T-cell (primary cell): ENCODE measurements at regions of chr4 and their contacts with region 1.

Region 1: DNA sequence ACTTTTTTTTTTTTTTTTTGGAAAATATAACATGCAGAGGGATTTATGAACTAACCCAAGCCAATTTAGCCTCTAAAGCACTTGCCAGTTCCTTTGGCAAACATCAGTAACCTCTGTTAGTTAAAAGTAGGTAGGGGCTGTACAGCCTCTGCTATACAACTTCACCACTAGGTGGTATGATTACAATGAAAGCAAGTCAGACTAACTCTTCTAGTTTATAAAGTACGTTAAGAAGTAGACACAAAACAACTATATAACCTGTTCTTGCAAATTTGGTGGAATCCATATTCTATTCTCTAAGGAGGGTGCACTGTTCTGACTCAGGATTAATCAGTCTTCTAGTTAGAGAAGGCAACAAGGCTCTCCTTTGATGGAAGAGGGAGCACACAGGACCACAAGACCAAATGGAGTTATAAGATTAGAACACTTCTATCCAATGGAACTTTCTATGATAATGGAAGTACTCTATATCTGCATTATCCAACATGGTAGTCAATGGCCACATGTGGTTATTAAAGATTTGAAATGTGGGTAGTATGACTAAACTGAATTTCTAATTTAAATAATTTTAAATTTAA is 12.8 kb downstream of the AIMP1 start:
- DNase-seq: peak in 1 of 35 experiments; percentile 35
- ATAC-seq: peak in 3 of 4 experiments; percentile 37 to 66 (median 54)
- H3K4me3 ChIP-seq: no peak overlapping the region
- H3K4me3 Mint-ChIP-seq: no peak overlapping the region
- H3K27ac ChIP-seq: no peak overlapping the region
- H3K27ac Mint-ChIP-seq: no peak overlapping the region
- H3K4me1 ChIP-seq: no peaks in the 10 kb centered on the region
- H3K4me1 Mint-ChIP-seq: peaks cover 0 to 15% (median 5%) of the 10 kb centered on the region in 3 donors
- H3K27me3 ChIP-seq: no peaks in the 10 kb centered on the region
- H3K27me3 Mint-ChIP-seq: no peaks in the 10 kb centered on the region

Region 2: DNA sequence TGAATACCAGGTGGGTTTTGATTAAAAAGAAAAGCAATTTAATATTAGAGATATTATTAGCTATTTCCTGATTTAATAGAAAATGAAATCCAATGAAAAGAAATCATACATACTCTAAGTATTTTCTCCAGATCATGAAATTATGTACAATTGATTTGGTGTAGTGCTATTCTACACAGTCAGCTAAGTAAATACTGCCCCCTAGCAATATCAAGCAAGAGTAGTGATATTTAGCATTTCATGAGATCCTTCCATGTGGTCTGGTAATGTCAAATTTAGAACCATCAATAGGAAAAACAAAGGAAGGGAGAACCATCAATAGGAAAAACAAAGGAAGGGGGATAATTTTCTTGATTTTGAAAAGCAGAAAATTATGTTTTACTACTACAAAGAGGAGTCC is 127.8 kb before region 1 on chr4:
- CTCF ChIA-PET with region 1: no interaction called
- POLR2A ChIA-PET with region 1: no interaction called
- DNase-seq: no peak
- ATAC-seq: no peak
- H3K4me3 ChIP-seq: no peak overlapping the region
- H3K4me3 Mint-ChIP-seq: no peak overlapping the region
- H3K27ac ChIP-seq: no peak overlapping the region
- H3K27ac Mint-ChIP-seq: no peak overlapping the region
- H3K4me1 ChIP-seq: no peaks in the 10 kb centered on the region
- H3K4me1 Mint-ChIP-seq: no peaks in the 10 kb centered on the region
- H3K27me3 ChIP-seq: no peaks in the 10 kb centered on the region
- H3K27me3 Mint-ChIP-seq: no peaks in the 10 kb centered on the region

Region 3: DNA sequence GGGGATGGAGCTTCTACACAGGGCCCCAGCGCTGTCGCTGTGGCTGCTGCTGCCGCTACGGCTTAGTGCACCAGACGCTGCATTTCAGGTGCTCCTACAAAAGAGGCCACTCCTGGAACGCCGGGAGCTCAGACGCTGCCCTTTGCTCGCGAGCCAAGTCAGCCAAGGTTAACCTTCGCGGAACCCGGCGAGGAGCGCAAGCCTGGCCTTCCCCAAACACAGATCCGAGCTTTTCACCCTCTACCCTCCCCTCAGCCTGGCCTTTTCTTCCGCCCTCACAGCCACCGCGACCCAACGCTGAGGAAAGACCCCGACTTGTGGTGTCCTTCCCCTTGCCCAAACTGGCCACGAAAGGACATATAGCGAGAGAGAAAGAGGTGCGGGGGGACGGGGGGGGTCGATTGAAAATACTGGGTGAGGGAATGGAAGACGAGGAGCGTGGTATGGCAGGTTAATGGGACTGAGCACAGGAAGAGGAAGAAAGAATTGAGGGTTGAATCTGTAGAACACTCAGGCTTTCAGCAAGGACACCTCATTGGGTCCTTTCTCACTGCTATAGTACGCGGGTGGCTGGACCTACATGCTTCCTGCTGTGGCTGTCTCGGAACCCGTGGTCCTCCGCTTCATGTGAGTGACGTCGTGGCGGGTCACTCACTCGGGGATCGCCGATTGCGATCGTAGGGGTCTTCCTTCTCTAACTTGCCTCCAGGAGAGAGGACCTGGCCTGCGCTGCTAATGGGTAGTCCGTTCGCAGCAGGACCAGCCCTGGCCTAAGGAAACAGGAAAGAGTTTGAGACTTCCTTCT is 13.0 kb before region 1 on chr4 and contains the starts of genes AIMP1 and TBCK:
- CTCF ChIA-PET with region 1: interaction called, 4 to 12 read pairs
- POLR2A ChIA-PET with region 1: interaction called, 5 read pairs
- DNase-seq: peak; percentile 81 to 93 (median 88)
- ATAC-seq: peak; percentile 87 to 92 (median 88)
- H3K4me3 ChIP-seq: peak within 1 kb of the TSS; percentile 79 to 93
- H3K4me3 Mint-ChIP-seq: no peak within 1 kb of the TSS
- H3K27ac ChIP-seq: peak within 1 kb of the TSS; percentile 94
- H3K27ac Mint-ChIP-seq: no peak within 1 kb of the TSS
- H3K4me1 ChIP-seq: peaks cover 7 to 28% of the 10 kb centered on the region in 2 experiments
- H3K4me1 Mint-ChIP-seq: peaks cover 18 to 52% (median 47%) of the 10 kb centered on the region in 3 donors
- H3K27me3 ChIP-seq: no peaks in the 10 kb centered on the region
- H3K27me3 Mint-ChIP-seq: no peaks in the 10 kb centered on the region
- total RNA-seq, gene AIMP1: 40.9 to 62.1 (median 45.5) TPM
- total RNA-seq, gene TBCK: 43.5 to 49.9 (median 48.1) TPM